ENCODE measurements at regions of chr3 and their contacts with region 1.

Region 1: DNA sequence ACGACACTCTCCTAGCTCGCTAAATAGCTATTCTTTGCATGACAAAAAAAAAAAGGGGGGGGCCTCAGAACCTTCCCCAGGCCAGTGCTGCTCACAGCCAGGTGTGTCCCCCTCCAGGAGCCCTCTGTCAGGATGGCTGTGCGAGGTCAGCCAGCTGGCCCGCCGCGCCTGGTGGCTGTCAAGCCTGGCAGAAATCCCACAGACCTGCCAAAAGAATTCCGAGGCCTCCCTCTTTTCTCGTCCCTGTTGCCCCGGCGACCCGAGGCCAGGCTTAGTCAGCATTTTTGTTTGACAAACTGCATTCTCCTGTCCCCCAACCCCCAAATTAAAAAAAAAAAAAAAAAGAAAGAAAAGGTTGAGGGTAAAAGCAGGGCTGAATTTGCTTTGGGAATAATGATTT is 61.9 kb downstream of the TM4SF4 start:
- DNase-seq: no peak
- H3K4me3 ChIP-seq: no peak overlapping the region
- H3K27ac ChIP-seq: peak overlapping the region in 6 of 8 donors; percentile 29 to 62 (median 55)
- H3K4me1 ChIP-seq: peaks cover 9 to 57% (median 36%) of the 10 kb centered on the region in 6 donors
- H3K27me3 ChIP-seq: no peaks in the 10 kb centered on the region
- CTCF ChIP-seq: no peak
- POLR2A ChIP-seq: no peak

Region 2: GRCh38 chr3:149657926-149658733 is 121.7 kb after region 1 on chr3 and contains the start of gene WWTR1:
- intact Hi-C with region 1: loop called (anchors 10 kb)
- DNase-seq: peak; percentile 89
- H3K4me3 ChIP-seq: peak within 1 kb of the TSS; percentile 37 to 76 (median 62)
- H3K27ac ChIP-seq: peak within 1 kb of the TSS; percentile 65 to 94 (median 90)
- H3K4me1 ChIP-seq: peaks cover 0 to 63% (median 30%) of the 10 kb centered on the region in 6 donors
- H3K27me3 ChIP-seq: peaks cover 0 to 66% (median 16%) of the 10 kb centered on the region in 7 donors
- CTCF ChIP-seq: no peak
- POLR2A ChIP-seq: peak in 1 of 3 donors; percentile 87
- total RNA-seq, gene WWTR1: 43.5 to 70.6 (median 63.7) TPM

Measured in spleen (tissue), 13 donors.